IMR-90 (cell line): ENCODE measurements at regions of chr16 and their contacts with region 1.

Region 1: GRCh38 chr16:76653390-76654026 is 376.3 kb downstream of the CNTNAP4 start:
- DNase-seq: peak; percentile 28
- ATAC-seq: no peak
- H3K4me3 ChIP-seq: no peak overlapping the region
- H3K27ac ChIP-seq: no peak overlapping the region
- H3K4me1 ChIP-seq: no peaks in the 10 kb centered on the region
- H3K27me3 ChIP-seq: no peaks in the 10 kb centered on the region
- CTCF ChIP-seq: peak; percentile 57
- POLR2A ChIP-seq: no peak
- RAD21 ChIP-seq: peak; percentile 66

Region 2: GRCh38 chr16:75801307-75801706 is 852.2 kb before region 1 on chr16:
- CTCF ChIA-PET with region 1: interaction called, 3 read pairs
- POLR2A ChIA-PET with region 1: no interaction called
- dilution Hi-C with region 1: no loop called
- in situ Hi-C with region 1: no loop called
- intact Hi-C with region 1: loop called (anchors 5 kb)
- DNase-seq: no peak
- ATAC-seq: no peak
- H3K4me3 ChIP-seq: no peak overlapping the region
- H3K27ac ChIP-seq: no peak overlapping the region
- H3K4me1 ChIP-seq: no peaks in the 10 kb centered on the region
- H3K27me3 ChIP-seq: no peaks in the 10 kb centered on the region
- CTCF ChIP-seq: peak; percentile 53
- POLR2A ChIP-seq: no peak
- RAD21 ChIP-seq: peak; percentile 57

Region 3: GRCh38 chr16:76464955-76465638 is 188.4 kb before region 1 on chr16:
- CTCF ChIA-PET with region 1: no interaction called
- POLR2A ChIA-PET with region 1: no interaction called
- dilution Hi-C with region 1: no loop called
- in situ Hi-C with region 1: no loop called
- intact Hi-C with region 1: loop called (anchors 5 kb)
- DNase-seq: no peak
- ATAC-seq: no peak
- H3K4me3 ChIP-seq: no peak overlapping the region
- H3K27ac ChIP-seq: no peak overlapping the region
- H3K4me1 ChIP-seq: no peaks in the 10 kb centered on the region
- H3K27me3 ChIP-seq: no peaks in the 10 kb centered on the region
- CTCF ChIP-seq: no peak
- POLR2A ChIP-seq: no peak
- RAD21 ChIP-seq: no peak